ENCODE measurements at regions of chr1 and their contacts with region 1.

Region 1: GRCh38 chr1:61472876-61473275 is 252.1 kb downstream of the TM2D1 start:
- DNase-seq: no peak
- H3K4me3 ChIP-seq: no peak overlapping the region
- H3K27ac ChIP-seq: no peak overlapping the region
- H3K4me1 ChIP-seq: no peaks in the 10 kb centered on the region
- H3K27me3 ChIP-seq: no peaks in the 10 kb centered on the region
- CTCF ChIP-seq: no peak
- POLR2A ChIP-seq: no peak

Region 2: DNA sequence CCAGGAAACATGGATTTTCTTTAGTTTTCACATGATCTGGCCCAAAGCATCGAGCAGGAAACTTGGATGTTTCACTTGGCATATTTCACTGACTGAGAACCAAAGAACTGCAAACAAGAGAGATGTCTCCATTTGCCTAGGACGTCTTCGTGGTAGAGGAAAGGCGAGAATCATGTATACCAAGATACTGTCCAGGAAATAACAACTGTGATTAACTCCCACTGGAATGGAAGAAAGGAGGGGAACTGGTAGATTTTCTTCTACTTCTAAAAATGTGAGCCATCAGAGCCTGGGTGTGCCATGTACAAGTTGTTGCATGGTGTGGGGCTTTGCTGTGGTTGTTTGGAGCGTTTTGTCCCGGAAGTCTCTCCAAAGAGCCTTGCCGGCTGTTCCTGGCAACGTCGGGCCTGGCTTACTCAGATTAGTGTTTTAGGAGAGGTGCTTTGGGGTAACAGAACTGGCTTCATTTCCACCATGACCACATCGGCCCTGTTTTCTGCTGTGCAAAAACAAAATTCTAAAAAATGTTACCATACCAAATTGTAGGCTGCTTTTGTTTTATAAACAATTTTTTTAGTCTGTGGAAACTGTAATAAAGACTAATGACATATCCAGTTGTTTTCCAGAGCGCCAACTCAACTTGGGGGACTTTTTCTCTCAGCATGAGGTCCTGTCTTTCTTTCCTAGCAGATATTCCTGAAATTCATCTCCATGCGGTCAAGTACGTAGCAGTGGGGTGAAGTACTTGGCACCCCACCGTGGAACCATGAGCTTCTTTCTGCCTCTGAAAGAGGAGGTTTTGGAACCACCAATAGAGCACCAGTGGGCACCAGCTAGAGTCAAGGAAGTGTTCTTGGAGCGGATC is 133.8 kb after region 1 on chr1:
- intact Hi-C with region 1: loop called (anchors 10 kb)
- DNase-seq: no peak
- H3K4me3 ChIP-seq: no peak overlapping the region
- H3K27ac ChIP-seq: peak overlapping the region in 1 of 2 donors; percentile 2
- H3K4me1 ChIP-seq: no peaks in the 10 kb centered on the region
- H3K27me3 ChIP-seq: no peaks in the 10 kb centered on the region
- CTCF ChIP-seq: no peak
- POLR2A ChIP-seq: no peak

Region 3: DNA sequence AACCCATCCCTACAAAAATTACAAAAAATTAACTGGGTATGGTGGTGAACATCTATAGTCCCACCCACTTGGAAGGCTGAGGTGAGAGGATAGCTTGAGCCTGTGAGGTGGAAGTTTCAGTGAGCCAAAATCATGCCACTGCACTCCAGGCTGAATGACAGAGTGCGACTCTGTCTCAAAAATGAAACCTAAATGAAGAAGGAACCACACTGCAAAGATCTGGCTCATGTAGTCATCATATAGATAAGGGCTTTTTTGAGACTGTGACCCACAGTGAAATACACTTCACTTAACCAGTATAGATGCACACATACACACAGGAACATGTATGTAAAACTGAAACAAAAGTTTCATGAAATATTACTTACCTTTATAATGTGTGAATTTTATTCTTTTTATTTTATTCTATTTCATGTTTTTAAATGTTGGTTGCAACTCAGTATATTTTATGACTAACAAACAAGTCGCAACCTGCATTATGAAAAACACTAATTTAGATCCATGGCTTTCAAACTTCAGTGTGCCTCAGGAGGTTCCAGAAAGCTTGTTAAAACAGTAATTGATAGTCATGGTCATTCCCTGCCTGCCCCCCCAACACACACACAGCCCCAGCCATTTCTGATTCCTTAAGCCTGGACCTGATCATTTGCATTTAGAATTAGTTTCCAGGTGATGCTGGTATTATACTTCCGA is 458.9 kb after region 1 on chr1:
- intact Hi-C with region 1: no loop called
- DNase-seq: no peak
- H3K4me3 ChIP-seq: no peak overlapping the region
- H3K27ac ChIP-seq: no peak overlapping the region
- H3K4me1 ChIP-seq: no peaks in the 10 kb centered on the region
- H3K27me3 ChIP-seq: no peaks in the 10 kb centered on the region
- CTCF ChIP-seq: no peak
- POLR2A ChIP-seq: no peak